IMR-90 (cell line): ENCODE measurements at regions of chr15 and their contacts with region 1.

Region 1: GRCh38 chr15:64809649-64810496 is 15.6 kb downstream of the PIF1 start:
- DNase-seq: peak; percentile 66
- ATAC-seq: peak; percentile 96
- H3K4me3 ChIP-seq: no peak overlapping the region
- H3K27ac ChIP-seq: no peak overlapping the region
- H3K4me1 ChIP-seq: peaks cover 1% of the 10 kb centered on the region; the same call in 1 of the 2 replicates
- H3K27me3 ChIP-seq: no peaks in the 10 kb centered on the region; the same call in 1 of the 2 replicates
- CTCF ChIP-seq: peak; percentile 91
- POLR2A ChIP-seq: no peak
- RAD21 ChIP-seq: peak; percentile 86

Region 2: GRCh38 chr15:64681424-64682024 is 128.3 kb before region 1 on chr15:
- CTCF ChIA-PET with region 1: no interaction called
- POLR2A ChIA-PET with region 1: no interaction called
- dilution Hi-C with region 1: no loop called
- in situ Hi-C with region 1: no loop called
- intact Hi-C with region 1: loop called (anchors 2 kb)
- DNase-seq: peak; percentile 65
- ATAC-seq: peak; percentile 83
- H3K4me3 ChIP-seq: no peak overlapping the region
- H3K27ac ChIP-seq: no peak overlapping the region
- H3K4me1 ChIP-seq: peaks cover 3% of the 10 kb centered on the region; the same call in 1 of the 2 replicates
- H3K27me3 ChIP-seq: no peaks in the 10 kb centered on the region
- CTCF ChIP-seq: peak; percentile 92
- POLR2A ChIP-seq: no peak
- RAD21 ChIP-seq: peak; percentile 84

Region 3: GRCh38 chr15:64731012-64731806 is 78.7 kb before region 1 on chr15:
- CTCF ChIA-PET with region 1: interaction called, 9 read pairs
- POLR2A ChIA-PET with region 1: interaction called, 4 read pairs
- dilution Hi-C with region 1: no loop called
- in situ Hi-C with region 1: loop called (anchors 5 kb)
- intact Hi-C with region 1: loop called (anchors 1 kb)
- DNase-seq: peak; percentile 59
- ATAC-seq: peak; percentile 80
- H3K4me3 ChIP-seq: no peak overlapping the region
- H3K27ac ChIP-seq: no peak overlapping the region
- H3K4me1 ChIP-seq: no peaks in the 10 kb centered on the region
- H3K27me3 ChIP-seq: no peaks in the 10 kb centered on the region
- CTCF ChIP-seq: peak; percentile 92
- POLR2A ChIP-seq: 0 out of 2 replicates have a peak, but pooled peaks have one; percentile 29
- RAD21 ChIP-seq: peak; percentile 96

Region 4: DNA sequence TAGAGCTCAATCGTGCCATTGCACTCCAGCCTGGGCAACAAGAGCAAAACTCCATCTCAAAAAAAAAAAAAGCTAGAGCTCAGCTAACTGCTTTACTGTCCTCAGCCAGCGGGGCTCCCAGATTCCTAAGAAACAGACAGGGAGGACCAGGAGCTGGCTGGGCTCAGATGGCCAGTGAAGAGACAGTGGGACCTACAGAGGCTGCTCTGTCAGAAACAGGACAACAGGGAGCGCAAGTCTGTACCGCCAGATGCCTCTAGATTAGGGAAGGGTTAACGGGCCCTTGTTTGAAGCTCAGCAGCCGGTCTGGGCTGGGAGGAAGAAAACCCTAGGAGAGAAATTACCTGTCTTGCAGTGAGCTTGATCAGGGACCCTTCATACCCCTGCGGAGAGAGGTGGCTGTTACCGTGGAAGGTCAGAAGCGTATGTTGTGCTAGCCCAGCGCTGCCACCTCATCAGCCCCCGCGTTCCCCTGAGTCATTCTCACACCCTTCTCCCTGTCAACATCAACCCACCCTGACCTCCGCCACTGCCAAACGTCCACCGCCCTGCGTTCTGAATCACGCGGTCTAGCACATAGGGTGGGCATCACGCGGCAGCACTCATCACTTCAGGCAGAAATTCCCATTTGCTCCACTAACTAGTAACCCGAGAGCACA is 59.7 kb before region 1 on chr15:
- CTCF ChIA-PET with region 1: interaction called, 11 read pairs
- POLR2A ChIA-PET with region 1: no interaction called
- dilution Hi-C with region 1: no loop called
- in situ Hi-C with region 1: no loop called
- intact Hi-C with region 1: no loop called
- DNase-seq: peak; percentile 57
- ATAC-seq: peak; percentile 85
- H3K4me3 ChIP-seq: no peak overlapping the region
- H3K27ac ChIP-seq: no peak overlapping the region
- H3K4me1 ChIP-seq: peaks cover 11% of the 10 kb centered on the region
- H3K27me3 ChIP-seq: peaks cover 2% of the 10 kb centered on the region; the same call in 1 of the 2 replicates
- CTCF ChIP-seq: peak; percentile 17; the same call in 1 of the 2 replicates
- POLR2A ChIP-seq: no peak
- RAD21 ChIP-seq: no peak